ENCODE measurements at regions of chr12 and their contacts with region 1.

Region 1: DNA sequence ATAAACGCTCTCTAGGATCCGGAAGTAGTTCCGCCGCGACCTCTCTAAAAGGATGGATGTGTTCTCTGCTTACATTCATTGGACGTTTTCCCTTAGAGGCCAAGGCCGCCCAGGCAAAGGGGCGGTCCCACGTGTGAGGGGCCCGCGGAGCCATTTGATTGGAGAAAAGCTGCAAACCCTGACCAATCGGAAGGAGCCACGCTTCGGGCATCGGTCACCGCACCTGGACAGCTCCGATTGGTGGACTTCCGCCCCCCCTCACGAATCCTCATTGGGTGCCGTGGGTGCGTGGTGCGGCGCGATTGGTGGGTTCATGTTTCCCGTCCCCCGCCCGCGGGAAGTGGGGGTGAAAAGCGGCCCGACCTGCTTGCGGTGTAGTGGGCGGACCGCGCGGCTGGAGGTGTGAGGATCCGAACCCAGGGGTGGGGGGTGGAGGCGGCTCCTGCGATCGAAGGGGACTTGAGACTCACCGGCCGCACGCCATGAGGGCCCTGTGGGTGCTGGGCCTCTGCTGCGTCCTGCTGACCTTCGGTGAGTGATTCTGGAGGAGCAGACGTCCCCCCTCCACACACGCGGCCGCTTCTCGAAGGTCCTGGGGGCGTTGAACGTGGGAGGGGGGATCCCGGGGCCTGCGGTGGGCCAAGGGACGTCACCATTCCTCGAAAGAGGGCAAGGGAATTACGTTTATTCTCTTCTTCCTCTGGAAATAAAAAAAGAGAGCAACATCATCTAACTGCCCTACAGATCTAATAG is at the start of gene HSP90B1:
- DNase-seq: peak; percentile 99
- total RNA-seq, gene HSP90B1: 433 TPM

Region 2: GRCh38 chr12:103667125-103667524 is 263.1 kb before region 1 on chr12:
- intact Hi-C with region 1: no loop called
- DNase-seq: no peak

Region 3: GRCh38 chr12:103956516-103957027 is 26.4 kb after region 1 on chr12:
- intact Hi-C with region 1: loop called (anchors 2 kb)
- DNase-seq: peak; percentile 74

Region 4: DNA sequence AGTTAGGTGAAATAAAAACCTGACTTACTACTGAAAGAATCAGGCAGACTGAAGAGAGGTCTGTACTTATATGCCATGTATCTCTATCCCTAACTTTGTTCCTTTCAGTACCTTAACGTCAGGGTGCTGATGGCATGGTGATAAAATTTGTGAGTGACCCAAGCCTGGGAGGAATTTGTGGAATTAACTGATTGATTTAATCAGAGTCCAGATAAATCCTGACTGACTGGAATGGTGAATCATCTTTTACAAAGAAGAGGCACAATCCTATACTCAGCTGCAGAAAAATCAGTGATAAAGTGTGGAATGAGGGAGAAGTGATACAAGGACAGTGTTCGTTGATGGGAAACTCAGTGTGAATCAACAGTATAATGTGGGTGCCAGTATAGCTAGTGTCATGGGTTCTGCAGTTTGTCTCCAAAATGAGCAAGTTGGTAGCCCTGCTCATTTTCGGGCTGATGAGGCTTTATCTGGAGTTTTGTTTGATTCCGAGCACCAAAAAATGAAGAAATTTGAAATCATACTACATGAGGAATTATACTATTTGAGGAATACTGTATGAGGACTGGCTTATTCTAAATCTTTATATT is 39.3 kb after region 1 on chr12:
- intact Hi-C with region 1: no loop called
- DNase-seq: no peak